ENCODE measurements at regions of chr4 and their contacts with region 1.

Region 1: DNA sequence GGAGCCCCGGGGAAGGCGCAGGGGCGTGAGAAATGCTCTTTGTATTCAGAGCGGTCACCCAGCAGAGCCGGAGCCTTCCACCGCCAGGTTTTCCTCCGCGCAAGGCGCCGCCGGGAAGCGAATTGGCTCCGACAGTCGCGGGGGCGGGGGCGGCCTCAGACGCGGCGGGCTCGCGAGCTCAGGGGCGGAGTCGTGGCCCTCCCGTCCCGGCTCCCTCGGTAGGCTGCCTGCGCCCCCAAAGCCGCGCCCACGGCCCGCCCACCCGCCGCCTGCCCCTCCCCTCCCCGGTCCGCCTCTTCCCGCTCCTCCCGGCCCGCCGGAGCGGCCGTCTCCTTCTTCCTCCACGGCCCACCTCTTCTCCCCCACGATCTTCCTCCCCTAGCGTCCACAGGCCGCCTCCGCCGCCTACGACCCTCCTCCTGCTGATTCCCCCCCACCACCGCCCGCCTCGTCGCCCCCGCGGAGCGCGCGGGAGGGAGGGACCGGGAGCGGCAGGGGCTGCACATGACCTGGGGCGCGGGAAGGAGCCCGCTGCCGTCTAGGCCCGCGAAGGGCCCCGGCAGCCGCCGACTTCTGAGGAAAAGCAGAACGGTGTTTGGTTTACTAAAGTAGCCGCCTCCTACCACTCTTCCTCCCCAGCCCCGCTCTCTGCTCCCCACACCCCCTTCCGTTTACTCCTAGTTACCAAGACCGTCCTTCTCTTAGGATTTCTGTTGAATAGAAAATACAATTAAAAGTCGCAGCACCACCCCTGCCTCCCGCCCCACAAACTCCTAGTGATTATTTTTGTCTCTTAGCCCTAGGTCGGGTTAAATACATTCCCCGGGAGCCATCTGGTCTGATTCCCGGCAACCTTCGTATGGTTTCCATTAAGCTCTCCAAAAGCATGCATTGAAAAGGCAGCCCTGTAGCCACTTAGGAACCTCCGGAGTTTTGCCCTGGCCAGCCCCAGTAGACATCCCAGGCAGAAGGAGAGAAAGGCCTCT is 53.2 kb downstream of the C4orf51 start:
- DNase-seq: peak; percentile 75 to 96
- H3K4me3 ChIP-seq: peak overlapping the region; percentile 65
- H3K27ac ChIP-seq: peak overlapping the region; percentile 100
- H3K4me1 ChIP-seq: peaks cover 41% of the 10 kb centered on the region
- H3K27me3 ChIP-seq: no peaks in the 10 kb centered on the region
- CTCF ChIP-seq: no peak

Region 2: GRCh38 chr4:145481164-145481941 is 251.8 kb before region 1 on chr4 and contains the start of gene SMAD1:
- CTCF ChIA-PET with region 1: no interaction called
- POLR2A ChIA-PET with region 1: interaction called, 17 read pairs
- intact Hi-C with region 1: no loop called
- DNase-seq: peak; percentile 38 to 74
- H3K4me3 ChIP-seq: peak within 1 kb of the TSS; percentile 86
- H3K27ac ChIP-seq: peak within 1 kb of the TSS; percentile 71
- H3K4me1 ChIP-seq: peaks cover 22% of the 10 kb centered on the region
- H3K27me3 ChIP-seq: no peaks in the 10 kb centered on the region
- CTCF ChIP-seq: no peak
- total RNA-seq, gene SMAD1: 15.1 and 16.1 TPM in 2 replicates

Region 3: DNA sequence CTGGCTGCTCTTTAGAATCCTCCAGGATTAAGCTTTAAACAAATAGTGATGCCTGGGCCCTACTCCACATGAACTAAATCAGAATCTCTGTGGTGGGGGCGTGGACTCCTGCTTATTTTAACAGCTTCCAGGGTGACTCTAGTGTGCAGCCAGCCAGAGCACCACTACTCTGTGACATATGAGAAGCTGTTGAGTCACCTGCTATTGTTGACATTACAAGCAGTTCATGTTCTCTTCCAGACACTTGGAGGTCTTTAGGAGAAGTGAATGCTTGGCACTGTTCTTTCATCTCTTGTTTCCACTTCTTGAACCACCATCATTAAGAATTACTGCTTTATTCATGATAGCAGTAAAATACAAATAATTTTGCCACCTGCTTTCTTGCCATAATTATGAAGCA is 53.7 kb before region 1 on chr4:
- CTCF ChIA-PET with region 1: no interaction called
- POLR2A ChIA-PET with region 1: interaction called, 8 read pairs
- intact Hi-C with region 1: loop called (anchors 1 kb)
- DNase-seq: peak; percentile 51 to 77
- H3K4me3 ChIP-seq: no peak overlapping the region
- H3K27ac ChIP-seq: peak overlapping the region; percentile 60
- H3K4me1 ChIP-seq: peaks cover 20% of the 10 kb centered on the region
- H3K27me3 ChIP-seq: no peaks in the 10 kb centered on the region
- CTCF ChIP-seq: no peak

Region 4: GRCh38 chr4:145773581-145774234 is 40.5 kb after region 1 on chr4:
- CTCF ChIA-PET with region 1: no interaction called
- POLR2A ChIA-PET with region 1: interaction called, 17 read pairs
- intact Hi-C with region 1: no loop called
- DNase-seq: no peak
- H3K4me3 ChIP-seq: no peak overlapping the region
- H3K27ac ChIP-seq: no peak overlapping the region
- H3K4me1 ChIP-seq: no peaks in the 10 kb centered on the region
- H3K27me3 ChIP-seq: no peaks in the 10 kb centered on the region
- CTCF ChIP-seq: no peak

Region 5: GRCh38 chr4:145936142-145936996 is 203.2 kb after region 1 on chr4:
- CTCF ChIA-PET with region 1: no interaction called
- POLR2A ChIA-PET with region 1: interaction called, 9 read pairs
- intact Hi-C with region 1: loop called (anchors 1 kb)
- DNase-seq: peak; percentile 72 to 75
- H3K4me3 ChIP-seq: peak overlapping the region; percentile 74
- H3K27ac ChIP-seq: peak overlapping the region; percentile 93
- H3K4me1 ChIP-seq: peaks cover 22% of the 10 kb centered on the region
- H3K27me3 ChIP-seq: no peaks in the 10 kb centered on the region
- CTCF ChIP-seq: peak; percentile 32; the same call in 1 of the 2 replicates

Region 6: GRCh38 chr4:147578051-147578476 is 1844.9 kb after region 1 on chr4:
- CTCF ChIA-PET with region 1: no interaction called
- POLR2A ChIA-PET with region 1: no interaction called
- intact Hi-C with region 1: loop called (anchors 10 kb)
- DNase-seq: peak; percentile 87 to 94
- H3K4me3 ChIP-seq: no peak overlapping the region
- H3K27ac ChIP-seq: peak overlapping the region; percentile 90
- H3K4me1 ChIP-seq: peaks cover 36% of the 10 kb centered on the region
- H3K27me3 ChIP-seq: no peaks in the 10 kb centered on the region
- CTCF ChIP-seq: no peak

Measured in PC-9 (cell line).